CD4-positive, alpha-beta memory T cell (primary cell): ENCODE measurements at regions of chr15 and their contacts with region 1.

Region 1: DNA sequence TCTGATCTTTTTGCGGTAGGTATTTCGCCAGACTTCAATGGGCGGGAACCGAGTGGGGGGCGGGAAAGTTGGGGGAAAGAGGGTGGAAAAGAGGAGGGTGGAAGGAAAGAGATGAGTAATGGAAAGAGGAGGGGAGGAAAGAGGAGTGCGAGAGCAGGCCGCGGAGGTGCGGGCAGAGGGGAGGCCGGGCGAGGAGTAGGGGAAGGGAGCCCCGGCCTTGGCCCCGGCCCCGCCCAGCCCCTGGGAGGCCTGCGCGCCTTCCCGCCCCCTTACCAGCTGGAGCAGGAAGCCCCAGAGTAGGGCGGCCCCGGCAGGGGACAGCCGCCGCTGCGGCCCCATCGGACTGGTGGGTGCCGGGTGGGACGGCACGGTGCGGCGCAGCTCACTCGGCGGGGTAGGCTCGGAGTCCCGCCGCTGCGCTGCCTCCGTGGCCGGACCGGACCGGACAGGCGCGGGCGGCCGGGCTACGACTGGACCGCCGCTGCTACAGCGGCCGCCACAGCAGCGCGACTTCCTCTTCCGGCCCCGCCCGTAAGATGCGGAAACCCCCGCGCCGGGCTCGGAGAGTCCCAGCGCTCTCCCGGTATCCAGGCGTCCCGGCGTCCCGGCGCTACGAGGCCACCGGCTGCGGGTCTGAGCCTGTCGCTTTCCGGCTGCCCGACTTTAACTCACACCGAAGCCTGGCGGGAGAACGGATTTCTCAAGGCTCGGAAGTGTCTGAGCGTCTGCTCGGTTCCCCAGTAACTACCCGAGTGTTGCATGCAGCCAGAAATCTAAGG is at the start of gene SPPL2A:
- DNase-seq: peak; percentile 71 to 84 (median 73)
- H3K4me3 ChIP-seq: peak within 1 kb of the TSS; percentile 85 to 91
- H3K4me3 Mint-ChIP-seq: peak within 1 kb of the TSS; percentile 87 to 97 (median 94)
- H3K27ac ChIP-seq: peak within 1 kb of the TSS; percentile 93
- H3K27ac Mint-ChIP-seq: peak within 1 kb of the TSS; percentile 94 to 98 (median 97)
- H3K4me1 ChIP-seq: peaks cover 24% of the 10 kb centered on the region
- H3K4me1 Mint-ChIP-seq: peaks cover 31 to 54% (median 44%) of the 10 kb centered on the region in 4 donors
- H3K27me3 ChIP-seq: no peaks in the 10 kb centered on the region
- H3K27me3 Mint-ChIP-seq: no peaks in the 10 kb centered on the region
- total RNA-seq, gene SPPL2A: 75.2 to 80.3 TPM

Region 2: DNA sequence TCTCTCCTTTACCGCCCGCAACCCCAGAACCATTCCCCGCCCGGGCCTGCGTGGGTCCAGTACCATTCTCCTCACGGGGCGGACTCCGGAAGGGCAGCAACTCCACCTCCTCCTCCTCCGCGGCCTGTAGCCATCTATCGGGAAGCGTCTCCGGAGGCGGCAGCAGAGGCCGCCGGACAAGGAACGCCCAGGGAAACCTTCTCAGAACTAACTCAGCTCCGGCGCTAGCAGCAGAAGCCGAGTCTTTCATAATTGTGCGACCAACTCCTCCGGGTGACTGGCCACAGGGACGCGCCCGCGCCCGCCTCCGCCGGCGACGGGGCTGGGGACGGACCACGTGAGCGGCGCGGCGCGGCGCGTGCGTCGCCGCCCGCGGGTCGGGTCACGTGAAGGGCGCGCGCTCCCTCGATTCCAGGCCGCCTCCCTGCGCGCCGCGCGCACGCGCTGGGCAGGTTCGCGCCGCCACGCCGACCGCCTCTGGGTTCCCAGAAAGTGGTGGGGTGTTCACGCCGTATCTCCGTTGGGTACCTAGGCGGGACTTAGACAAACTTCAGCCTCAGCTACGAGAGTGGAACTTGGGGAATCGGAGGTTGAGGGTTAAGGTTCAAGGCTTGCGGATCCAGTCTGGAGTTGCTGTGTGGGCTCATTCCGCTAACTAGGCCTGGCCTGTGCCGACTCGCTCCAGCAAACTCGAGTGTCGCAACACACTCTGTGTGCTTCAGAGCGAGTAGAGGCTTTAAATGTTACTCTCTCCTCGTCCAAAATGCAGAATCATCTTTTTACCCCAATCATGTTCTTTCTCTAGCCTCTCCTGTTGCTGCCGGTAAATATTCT is 78.7 kb before region 1 on chr15 and contains the start of gene TRPM7:
- CTCF ChIA-PET with region 1: no interaction called
- POLR2A ChIA-PET with region 1: interaction called, 11 read pairs
- intact Hi-C with region 1: loop called (anchors 1 kb)
- DNase-seq: peak; percentile 86 to 90 (median 90)
- H3K4me3 ChIP-seq: peak within 1 kb of the TSS; percentile 89 to 99
- H3K4me3 Mint-ChIP-seq: peak within 1 kb of the TSS; percentile 98 to 100 (median 99)
- H3K27ac ChIP-seq: peak within 1 kb of the TSS; percentile 99
- H3K27ac Mint-ChIP-seq: peak within 1 kb of the TSS; percentile 98 to 100 (median 99)
- H3K4me1 ChIP-seq: peaks cover 52% of the 10 kb centered on the region
- H3K4me1 Mint-ChIP-seq: peaks cover 32 to 61% (median 45%) of the 10 kb centered on the region in 4 donors
- H3K27me3 ChIP-seq: no peaks in the 10 kb centered on the region
- H3K27me3 Mint-ChIP-seq: no peaks in the 10 kb centered on the region
- total RNA-seq, gene TRPM7: 65.3 to 66.7 TPM

Region 3: GRCh38 chr15:50786871-50787270 is 21.5 kb after region 1 on chr15:
- CTCF ChIA-PET with region 1: no interaction called
- POLR2A ChIA-PET with region 1: no interaction called
- intact Hi-C with region 1: no loop called
- DNase-seq: no peak
- H3K4me3 ChIP-seq: no peak overlapping the region
- H3K4me3 Mint-ChIP-seq: no peak overlapping the region
- H3K27ac ChIP-seq: no peak overlapping the region
- H3K27ac Mint-ChIP-seq: no peak overlapping the region
- H3K4me1 ChIP-seq: no peaks in the 10 kb centered on the region
- H3K4me1 Mint-ChIP-seq: no peaks in the 10 kb centered on the region
- H3K27me3 ChIP-seq: no peaks in the 10 kb centered on the region
- H3K27me3 Mint-ChIP-seq: peaks cover 0 to 2% of the 10 kb centered on the region in 2 donors

Region 4: GRCh38 chr15:50876989-50877360 is 111.6 kb after region 1 on chr15:
- CTCF ChIA-PET with region 1: interaction called, 3 read pairs
- POLR2A ChIA-PET with region 1: no interaction called
- intact Hi-C with region 1: loop called (anchors 2 kb)
- DNase-seq: peak; percentile 56 to 76 (median 69)
- H3K4me3 ChIP-seq: peak overlapping the region in 1 of 2 donors; percentile 29
- H3K4me3 Mint-ChIP-seq: peak overlapping the region; percentile 49 to 87 (median 74)
- H3K27ac ChIP-seq: no peak overlapping the region
- H3K27ac Mint-ChIP-seq: peak overlapping the region in 5 of 7 donors; percentile 38 to 64 (median 58)
- H3K4me1 ChIP-seq: peaks cover 20% of the 10 kb centered on the region
- H3K4me1 Mint-ChIP-seq: peaks cover 12 to 41% (median 20%) of the 10 kb centered on the region in 4 donors
- H3K27me3 ChIP-seq: no peaks in the 10 kb centered on the region
- H3K27me3 Mint-ChIP-seq: peaks cover 0 to 6% of the 10 kb centered on the region in 2 donors

Region 5: DNA sequence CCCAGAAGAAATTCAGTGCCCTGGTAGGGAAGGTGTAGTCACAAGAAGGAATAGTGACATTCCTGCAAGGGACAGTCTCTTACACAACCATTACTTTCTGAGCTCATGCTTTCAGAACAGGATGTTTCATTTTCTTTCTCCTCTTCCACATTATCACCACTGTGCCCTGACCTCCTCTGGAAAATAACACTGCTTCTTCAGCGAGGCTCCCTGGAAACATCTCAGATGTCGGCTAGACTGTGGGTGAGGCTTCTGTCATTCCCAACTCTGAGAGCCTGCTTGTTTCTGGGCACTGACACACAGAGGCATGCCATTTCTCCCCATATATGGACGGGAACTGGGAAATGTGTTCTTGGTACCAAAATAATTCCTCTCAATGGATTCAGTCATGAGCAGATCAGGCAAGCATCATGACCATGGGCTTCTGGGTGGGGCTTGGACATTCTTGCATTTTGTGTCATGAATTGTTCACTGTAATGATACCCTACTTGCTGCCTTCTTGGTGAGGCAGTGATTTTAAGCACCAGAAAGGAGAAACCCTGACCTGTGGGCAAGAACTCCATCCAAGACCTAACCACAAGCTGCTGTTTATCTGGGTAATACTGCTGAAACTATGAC is 343.7 kb after region 1 on chr15:
- CTCF ChIA-PET with region 1: no interaction called
- POLR2A ChIA-PET with region 1: no interaction called
- intact Hi-C with region 1: no loop called
- DNase-seq: no peak
- H3K4me3 ChIP-seq: no peak overlapping the region
- H3K4me3 Mint-ChIP-seq: no peak overlapping the region
- H3K27ac ChIP-seq: no peak overlapping the region
- H3K27ac Mint-ChIP-seq: no peak overlapping the region
- H3K4me1 ChIP-seq: no peaks in the 10 kb centered on the region
- H3K4me1 Mint-ChIP-seq: no peaks in the 10 kb centered on the region
- H3K27me3 ChIP-seq: no peaks in the 10 kb centered on the region
- H3K27me3 Mint-ChIP-seq: peaks cover 9 to 16% of the 10 kb centered on the region in 2 donors